ENCODE measurements at regions of chr1 and their contacts with region 1.

Region 1: DNA sequence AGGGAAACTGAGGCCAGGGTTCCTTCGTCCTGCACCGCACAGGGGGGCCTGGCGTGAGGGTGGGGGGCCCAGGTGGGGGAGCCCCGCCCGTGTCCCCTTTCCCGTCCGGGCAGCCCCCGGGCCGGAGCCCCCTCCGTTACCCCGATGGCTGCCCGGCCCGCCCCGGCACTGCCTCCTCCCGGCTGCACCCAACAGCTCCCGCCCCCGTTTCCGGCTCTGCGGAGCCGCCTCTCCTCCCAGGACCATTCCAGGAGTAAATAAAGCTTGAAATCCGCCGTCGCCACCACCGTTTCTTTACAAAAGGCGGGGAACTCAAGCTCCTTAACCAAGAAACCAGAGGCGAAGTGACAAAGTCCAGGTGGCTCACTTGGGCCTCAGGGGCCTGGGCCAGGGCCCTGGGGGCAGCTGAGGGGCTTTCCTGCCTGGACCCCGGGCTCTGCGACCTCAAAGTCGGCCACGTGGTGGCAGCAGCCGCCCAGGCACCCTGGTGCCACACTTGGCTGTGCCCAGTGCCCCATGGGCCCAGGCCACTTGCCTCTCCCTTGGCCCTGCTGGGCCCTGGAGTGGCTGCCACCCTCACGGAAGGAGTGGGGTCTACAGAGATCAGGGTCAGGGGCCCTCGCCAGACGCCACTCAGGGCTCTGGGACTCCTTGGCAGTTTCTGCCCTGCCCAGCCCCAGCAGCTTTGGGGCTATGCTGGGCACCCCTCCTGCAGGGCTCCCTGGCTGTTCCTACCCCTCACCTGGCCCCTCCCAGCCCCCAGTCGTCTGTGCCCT is 514 bp upstream of the FAAP20 start:
- DNase-seq: peak; percentile 92
- ATAC-seq: peak; percentile 73
- H3K4me3 Mint-ChIP-seq: peak overlapping the region; percentile 79
- H3K27ac Mint-ChIP-seq: peak overlapping the region; percentile 80; the same call in 1 of the 2 replicates
- H3K4me1 Mint-ChIP-seq: peaks cover 14% of the 10 kb centered on the region
- H3K27me3 Mint-ChIP-seq: no peaks in the 10 kb centered on the region; the same call in 1 of the 2 replicates
- CTCF ChIP-seq: peak; percentile 47; the same call in 1 of the 2 replicates

Region 2: DNA sequence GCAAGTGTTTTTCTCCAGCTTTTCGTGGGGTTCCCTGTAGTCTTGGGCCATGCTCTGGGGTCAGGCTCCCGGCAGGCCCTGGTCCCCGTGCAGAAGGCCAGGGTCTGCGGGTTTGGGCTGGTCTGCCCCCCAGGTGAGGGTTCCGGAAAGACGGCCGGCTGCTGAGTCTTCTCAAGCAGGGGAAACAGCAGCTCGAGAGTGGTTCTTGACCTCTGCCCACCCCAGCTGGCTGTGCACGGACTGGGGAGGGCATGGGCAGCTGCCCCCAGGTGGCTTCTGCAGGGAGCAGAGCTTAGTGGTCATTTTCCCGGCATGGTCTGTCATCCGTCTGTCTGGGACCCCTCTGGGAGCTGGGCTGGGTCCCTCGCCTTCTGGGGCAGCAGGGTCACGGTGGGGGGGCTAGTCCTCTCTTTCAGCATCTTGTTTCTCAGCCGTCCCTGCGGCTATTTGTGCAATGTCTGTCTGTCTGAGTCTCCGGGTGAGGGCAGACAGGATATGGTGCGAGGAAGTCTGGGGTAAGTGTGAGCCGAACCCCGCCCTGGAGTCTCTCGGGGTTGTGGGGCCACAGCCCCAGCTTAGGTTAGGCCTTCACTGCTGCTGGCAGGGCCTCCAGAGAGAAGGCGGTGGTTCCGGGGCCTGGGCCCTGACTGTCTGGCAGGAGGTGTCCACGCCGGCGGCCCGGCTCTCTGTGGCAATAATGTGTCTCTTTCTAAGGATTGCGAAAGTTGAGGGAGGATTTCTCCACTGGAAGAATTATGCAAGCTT is 39.1 kb after region 1 on chr1:
- CTCF ChIA-PET with region 1: interaction called, 14 read pairs
- POLR2A ChIA-PET with region 1: interaction called, 4 read pairs
- DNase-seq: no peak
- ATAC-seq: no peak
- H3K4me3 Mint-ChIP-seq: no peak overlapping the region
- H3K27ac Mint-ChIP-seq: peak overlapping the region; percentile 80
- H3K4me1 Mint-ChIP-seq: peaks cover 66% of the 10 kb centered on the region
- H3K27me3 Mint-ChIP-seq: no peaks in the 10 kb centered on the region
- CTCF ChIP-seq: no peak

Region 3: DNA sequence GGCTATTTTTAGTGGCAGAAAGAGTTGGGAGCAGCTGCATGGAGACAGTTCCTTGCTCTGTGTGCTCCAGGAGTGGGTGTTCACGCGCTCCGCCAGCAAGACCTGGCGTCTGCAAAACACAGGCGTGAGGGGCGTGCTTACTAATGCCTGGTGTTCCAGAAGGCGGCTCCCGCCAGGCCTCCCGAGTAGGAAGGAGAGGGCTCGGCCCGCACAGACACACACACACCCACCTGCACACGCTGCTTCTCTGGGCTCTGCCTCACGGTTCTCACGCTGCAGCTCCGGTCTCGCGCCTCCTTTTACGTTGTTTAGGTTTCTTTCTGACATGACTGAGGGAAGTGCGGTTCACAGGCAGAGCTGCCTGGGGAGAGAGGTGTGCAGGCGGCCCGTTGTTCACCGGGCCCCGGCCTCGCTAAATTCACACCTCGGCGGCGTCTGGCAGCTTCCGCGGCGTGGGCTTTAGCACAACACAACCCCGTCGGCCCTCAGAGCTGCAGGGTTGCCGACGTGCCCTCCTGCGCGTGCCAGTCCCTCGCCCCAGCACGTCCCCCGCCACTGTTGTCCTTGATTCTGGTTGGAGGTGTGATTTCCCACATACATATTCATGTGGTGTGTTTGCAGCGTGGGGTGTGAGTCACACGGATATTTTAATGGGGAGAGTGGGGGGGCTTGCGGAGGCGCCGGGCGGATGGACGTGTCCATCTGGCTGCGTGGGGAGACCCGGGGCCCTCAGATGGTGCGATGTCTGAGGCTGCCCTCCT is 110.0 kb after region 1 on chr1:
- CTCF ChIA-PET with region 1: interaction called, 16 read pairs
- POLR2A ChIA-PET with region 1: no interaction called
- DNase-seq: no peak
- ATAC-seq: no peak
- H3K4me3 Mint-ChIP-seq: no peak overlapping the region
- H3K27ac Mint-ChIP-seq: no peak overlapping the region
- H3K4me1 Mint-ChIP-seq: peaks cover 2% of the 10 kb centered on the region; the same call in 1 of the 2 replicates
- H3K27me3 Mint-ChIP-seq: no peaks in the 10 kb centered on the region
- CTCF ChIP-seq: no peak

Region 4: DNA sequence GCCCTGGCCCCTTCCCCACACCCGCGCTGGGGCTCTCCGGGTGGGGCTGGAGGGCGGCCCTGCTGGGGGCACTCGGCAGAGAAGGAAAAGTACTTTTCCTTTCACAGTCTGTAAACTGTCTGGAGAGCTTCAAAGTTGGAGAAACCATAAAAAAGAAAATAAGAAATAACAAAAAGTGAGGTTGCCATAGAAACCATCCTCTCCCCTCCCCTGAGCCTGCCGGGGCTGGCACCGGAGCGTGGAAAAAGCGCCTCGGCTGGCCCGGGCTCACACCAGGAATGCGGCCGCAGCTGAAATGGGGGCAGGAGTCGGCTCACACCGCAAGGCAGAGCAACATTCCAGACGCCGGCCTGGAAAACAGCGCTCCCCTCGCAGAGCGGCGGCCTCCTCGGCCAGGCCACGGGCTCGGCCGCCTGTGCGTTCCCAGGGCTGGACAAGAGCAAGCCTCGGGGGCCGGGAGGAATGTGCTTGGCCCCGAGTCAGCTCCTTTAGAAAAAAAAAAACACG is 127.0 kb after region 1 on chr1:
- CTCF ChIA-PET with region 1: interaction called, 42 read pairs
- POLR2A ChIA-PET with region 1: interaction called, 3 read pairs
- DNase-seq: peak; percentile 58
- ATAC-seq: peak; percentile 63
- H3K4me3 Mint-ChIP-seq: no peak overlapping the region
- H3K27ac Mint-ChIP-seq: no peak overlapping the region
- H3K4me1 Mint-ChIP-seq: peaks cover 1% of the 10 kb centered on the region
- H3K27me3 Mint-ChIP-seq: peaks cover 3% of the 10 kb centered on the region; the same call in 1 of the 2 replicates
- CTCF ChIP-seq: no peak

Measured in WTC11 (cell line).